ENCODE measurements at regions of chr4 and their contacts with region 1.

Region 1: GRCh38 chr4:158671915-158672806 is at the start of gene ETFDH:
- DNase-seq: peak; percentile 99
- H3K4me3 Mint-ChIP-seq: peak within 1 kb of the TSS; percentile 95
- H3K27ac Mint-ChIP-seq: peak within 1 kb of the TSS; percentile 96
- H3K4me1 Mint-ChIP-seq: peaks cover 8% of the 10 kb centered on the region
- H3K27me3 Mint-ChIP-seq: no peaks in the 10 kb centered on the region
- CTCF ChIP-seq: peak; percentile 25
- total RNA-seq, gene ETFDH: 15.8 and 19.2 TPM in 2 replicates

Region 2: DNA sequence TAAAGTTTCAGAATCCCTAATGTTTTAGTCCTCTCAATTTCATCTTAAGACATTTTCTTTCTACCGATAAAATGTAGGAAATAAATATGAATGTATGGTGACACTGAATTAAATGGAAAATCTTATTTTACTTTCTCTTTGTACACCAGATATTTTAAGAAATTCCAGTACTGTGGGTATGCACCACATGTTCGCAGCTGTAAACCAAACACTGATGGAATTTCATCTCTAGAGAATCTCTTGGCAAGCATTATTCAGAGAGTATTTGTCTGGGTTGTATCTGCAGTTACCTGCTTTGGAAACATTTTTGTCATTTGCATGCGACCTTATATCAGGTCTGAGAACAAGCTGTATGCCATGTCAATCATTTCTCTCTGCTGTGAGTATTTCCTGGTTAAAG is 27.4 kb before region 1 on chr4:
- CTCF ChIA-PET with region 1: interaction called, 10 read pairs
- POLR2A ChIA-PET with region 1: no interaction called
- intact Hi-C with region 1: no loop called
- DNase-seq: no peak
- H3K4me3 Mint-ChIP-seq: no peak overlapping the region
- H3K27ac Mint-ChIP-seq: no peak overlapping the region
- H3K4me1 Mint-ChIP-seq: no peaks in the 10 kb centered on the region
- H3K27me3 Mint-ChIP-seq: no peaks in the 10 kb centered on the region
- CTCF ChIP-seq: no peak

Region 3: DNA sequence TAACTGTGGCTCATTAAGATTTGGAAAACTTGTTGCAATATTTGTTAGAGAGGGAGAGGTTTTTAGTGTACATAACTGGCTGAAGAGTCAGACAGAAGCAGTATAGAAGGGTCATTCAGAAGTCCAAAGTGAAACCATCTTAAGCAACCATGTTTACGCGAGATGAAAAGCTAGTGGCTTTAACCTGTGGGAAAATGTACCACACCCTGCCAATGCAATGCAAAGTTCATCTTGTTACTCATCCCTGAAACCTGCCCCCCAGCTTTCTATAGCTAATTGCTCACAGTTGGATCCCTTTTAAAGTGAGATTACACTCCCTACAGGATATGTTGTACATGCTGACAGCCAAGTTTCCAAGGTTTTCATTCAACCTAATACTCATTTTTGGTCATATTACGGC is 334.0 kb after region 1 on chr4:
- CTCF ChIA-PET with region 1: no interaction called
- POLR2A ChIA-PET with region 1: no interaction called
- intact Hi-C with region 1: no loop called
- DNase-seq: peak; percentile 93
- H3K4me3 Mint-ChIP-seq: peak overlapping the region; percentile 21
- H3K27ac Mint-ChIP-seq: peak overlapping the region; percentile 75
- H3K4me1 Mint-ChIP-seq: peaks cover 29% of the 10 kb centered on the region
- H3K27me3 Mint-ChIP-seq: no peaks in the 10 kb centered on the region
- CTCF ChIP-seq: no peak

Measured in MCF 10A (cell line).